ENCODE measurements at regions of chr15 and their contacts with region 1.

Region 1: DNA sequence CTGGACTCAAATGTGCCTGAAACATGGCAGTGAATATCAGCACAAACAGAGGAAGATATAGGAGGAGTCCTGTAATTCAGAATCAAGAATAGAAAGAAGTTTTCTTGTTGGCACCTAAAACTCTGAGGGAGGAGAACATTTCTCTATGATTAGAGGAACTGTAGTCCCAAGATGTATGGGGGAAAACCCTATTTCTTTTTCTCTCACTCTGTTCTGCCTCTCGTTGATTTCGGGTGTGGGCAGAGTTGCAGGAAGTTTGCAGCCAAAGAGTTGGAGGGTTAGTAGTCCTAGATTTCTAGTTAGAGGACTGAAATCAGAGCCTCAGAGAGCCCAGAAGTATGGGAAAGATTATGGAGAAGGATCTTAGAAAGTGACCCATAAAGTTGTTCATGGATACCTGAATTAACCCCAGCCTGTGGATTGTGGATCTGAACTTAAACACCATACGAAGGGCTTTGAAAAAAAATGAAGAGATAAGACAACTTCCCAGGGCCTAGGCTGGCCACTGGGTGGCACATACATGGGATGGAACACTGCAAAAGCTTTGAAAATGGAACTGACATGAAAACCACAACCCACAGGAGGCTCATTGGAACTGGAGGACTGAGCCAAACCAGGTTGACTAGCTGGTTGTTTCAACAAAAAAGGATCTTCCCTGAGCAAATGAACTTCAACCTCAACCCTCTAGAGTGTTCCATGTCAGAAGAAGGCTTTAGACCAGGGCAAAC is 34.6 kb downstream of the FMN1 start:
- DNase-seq: no peak
- ATAC-seq: peak in 3 of 8 donors; percentile 8 to 36 (median 23)
- H3K4me3 ChIP-seq: no peak overlapping the region
- H3K27ac ChIP-seq: peak overlapping the region in 6 of 10 donors; percentile 19 to 79 (median 71)
- H3K4me1 ChIP-seq: peaks cover 0 to 40% (median 5%) of the 10 kb centered on the region in 9 donors
- H3K27me3 ChIP-seq: no peaks in the 10 kb centered on the region
- CTCF ChIP-seq: peak in 1 of 9 donors; percentile 11

Region 2: DNA sequence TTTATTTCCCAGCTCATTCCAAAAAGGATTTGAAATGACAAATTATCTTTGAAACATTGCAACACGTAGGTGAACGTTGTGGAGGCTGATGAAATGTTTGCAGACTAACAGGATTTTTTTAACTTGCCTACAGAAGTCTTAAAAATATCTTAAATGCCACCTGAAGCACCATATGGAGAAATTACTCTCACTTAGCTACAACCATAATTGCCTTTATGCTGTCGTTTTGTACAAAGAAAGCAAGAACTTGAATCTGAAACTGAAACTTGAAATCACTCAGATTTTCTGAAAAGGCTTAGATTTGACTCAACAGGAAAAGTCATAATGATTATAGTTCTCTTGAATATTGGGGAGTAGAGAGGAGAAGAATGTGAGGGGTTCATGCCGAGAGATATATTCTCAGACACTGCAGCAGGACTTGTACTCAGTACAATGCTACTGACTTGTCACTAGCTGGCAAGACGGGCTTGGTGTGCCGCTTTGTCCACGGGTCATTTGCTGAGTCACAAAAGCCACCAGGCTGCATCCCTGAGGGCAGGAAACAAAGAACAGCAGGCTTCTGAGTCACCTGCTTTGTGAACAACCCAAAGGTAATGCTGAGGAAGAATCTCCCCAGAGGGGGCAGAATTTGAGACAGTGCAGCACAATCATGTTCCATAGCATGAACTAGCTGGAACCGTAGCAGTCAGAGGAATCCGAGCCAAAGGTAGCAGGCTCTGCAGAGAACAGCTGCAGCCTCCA is 41.8 kb after region 1 on chr15:
- intact Hi-C with region 1: no loop called
- DNase-seq: peak in 1 of 2 donors; percentile 7
- ATAC-seq: peak in 5 of 8 donors; percentile 25 to 85 (median 41)
- H3K4me3 ChIP-seq: peak overlapping the region in 6 of 10 donors; percentile 11 to 45 (median 30)
- H3K27ac ChIP-seq: peak overlapping the region in 1 of 10 donors; percentile 35
- H3K4me1 ChIP-seq: peaks cover 0 to 12% (median 0%) of the 10 kb centered on the region in 9 donors
- H3K27me3 ChIP-seq: peaks cover 0 to 10% (median 0%) of the 10 kb centered on the region in 7 donors
- CTCF ChIP-seq: peak in 1 of 9 donors; percentile 9

Region 3: GRCh38 chr15:33226559-33227181 is 66.8 kb after region 1 on chr15:
- intact Hi-C with region 1: loop called in 1 of 10 experiments (anchors 10 kb)
- DNase-seq: peak in 1 of 2 donors; percentile 59
- ATAC-seq: peak in 7 of 8 donors; percentile 67 to 91 (median 85)
- H3K4me3 ChIP-seq: no peak overlapping the region
- H3K27ac ChIP-seq: no peak overlapping the region
- H3K4me1 ChIP-seq: peaks cover 0 to 13% (median 0%) of the 10 kb centered on the region in 9 donors
- H3K27me3 ChIP-seq: no peaks in the 10 kb centered on the region
- CTCF ChIP-seq: peak in 7 of 9 donors; percentile 30 to 56 (median 38)

Measured in heart right ventricle (tissue), 16 donors.